Esophagus squamous epithelium (tissue), 5 donors: ENCODE measurements at regions of chr1 and their contacts with region 1.

Region 1: GRCh38 chr1:39098546-39099250 is 72.5 kb downstream of the NDUFS5 start:
- DNase-seq: no peak
- H3K4me3 ChIP-seq: no peak overlapping the region
- H3K27ac ChIP-seq: no peak overlapping the region
- H3K4me1 ChIP-seq: peaks cover 10 to 26% (median 11%) of the 10 kb centered on the region in 3 donors
- H3K27me3 ChIP-seq: no peaks in the 10 kb centered on the region
- CTCF ChIP-seq: peak; percentile 51 to 85 (median 66)
- POLR2A ChIP-seq: no peak

Region 2: DNA sequence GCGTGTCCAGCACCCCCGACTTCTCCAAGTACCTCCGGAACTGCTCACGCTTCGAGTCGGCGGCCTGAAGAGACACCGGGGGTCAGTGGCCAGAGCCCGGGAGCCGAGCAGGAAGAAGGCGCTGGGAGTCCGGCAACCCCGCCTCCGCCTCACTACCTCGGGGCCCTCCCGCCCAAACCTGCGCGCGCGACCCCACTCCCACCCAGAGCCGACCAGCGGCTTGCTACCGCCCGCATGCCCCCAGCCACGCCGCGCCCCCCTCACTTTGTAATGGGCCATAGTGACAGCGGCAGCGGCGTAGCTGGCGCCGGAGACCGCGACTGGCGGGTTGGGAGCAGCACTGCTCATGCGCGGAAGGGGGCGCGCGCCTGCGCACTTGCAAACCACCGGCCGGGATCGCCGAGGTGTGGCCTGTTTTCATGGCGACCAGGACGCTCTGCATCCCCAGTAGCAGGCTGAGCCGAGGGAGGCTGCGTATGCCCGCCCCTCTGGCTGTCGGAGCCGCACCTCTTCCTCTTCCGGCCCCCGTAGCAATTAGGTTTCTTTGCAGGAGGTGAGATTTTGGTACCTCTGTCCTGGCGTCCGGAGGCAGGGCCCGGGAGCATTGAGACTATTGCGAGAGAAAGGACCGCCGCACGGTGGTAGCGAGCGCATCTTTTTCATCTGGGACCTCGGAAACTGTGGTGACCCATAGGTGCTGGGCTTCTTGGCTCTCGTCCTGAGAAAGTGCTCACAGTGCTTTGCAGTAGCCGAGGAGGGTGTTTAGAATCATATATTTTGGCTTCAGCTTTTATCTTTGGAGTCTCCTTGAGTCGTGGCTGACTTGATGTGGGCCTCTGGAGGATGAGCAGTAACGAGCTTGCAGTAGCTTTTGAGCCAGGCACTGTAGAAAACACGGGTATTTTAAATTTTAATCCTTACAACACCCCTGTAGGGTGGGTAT is 225.4 kb before region 1 on chr1 and contains the start of gene MYCBP:
- intact Hi-C with region 1: loop called (anchors 10 kb)
- DNase-seq: peak; percentile 82
- H3K4me3 ChIP-seq: peak within 1 kb of the TSS; percentile 94 to 95 (median 94)
- H3K27ac ChIP-seq: peak within 1 kb of the TSS; percentile 71 to 87 (median 80)
- H3K4me1 ChIP-seq: peaks cover 9 to 27% (median 11%) of the 10 kb centered on the region in 3 donors
- H3K27me3 ChIP-seq: no peaks in the 10 kb centered on the region
- CTCF ChIP-seq: peak in 5 of 6 experiments; percentile 12 to 48 (median 27)
- POLR2A ChIP-seq: peak in 1 of 4 donors; percentile 69
- total RNA-seq, gene MYCBP: 22.7 to 42.0 (median 26.0) TPM

Region 3: GRCh38 chr1:39145331-39145965 is 46.8 kb after region 1 on chr1:
- intact Hi-C with region 1: no loop called
- DNase-seq: no peak
- H3K4me3 ChIP-seq: no peak overlapping the region
- H3K27ac ChIP-seq: no peak overlapping the region
- H3K4me1 ChIP-seq: peaks cover 4 to 49% (median 27%) of the 10 kb centered on the region in 3 donors
- H3K27me3 ChIP-seq: no peaks in the 10 kb centered on the region
- CTCF ChIP-seq: no peak
- POLR2A ChIP-seq: no peak

Region 4: DNA sequence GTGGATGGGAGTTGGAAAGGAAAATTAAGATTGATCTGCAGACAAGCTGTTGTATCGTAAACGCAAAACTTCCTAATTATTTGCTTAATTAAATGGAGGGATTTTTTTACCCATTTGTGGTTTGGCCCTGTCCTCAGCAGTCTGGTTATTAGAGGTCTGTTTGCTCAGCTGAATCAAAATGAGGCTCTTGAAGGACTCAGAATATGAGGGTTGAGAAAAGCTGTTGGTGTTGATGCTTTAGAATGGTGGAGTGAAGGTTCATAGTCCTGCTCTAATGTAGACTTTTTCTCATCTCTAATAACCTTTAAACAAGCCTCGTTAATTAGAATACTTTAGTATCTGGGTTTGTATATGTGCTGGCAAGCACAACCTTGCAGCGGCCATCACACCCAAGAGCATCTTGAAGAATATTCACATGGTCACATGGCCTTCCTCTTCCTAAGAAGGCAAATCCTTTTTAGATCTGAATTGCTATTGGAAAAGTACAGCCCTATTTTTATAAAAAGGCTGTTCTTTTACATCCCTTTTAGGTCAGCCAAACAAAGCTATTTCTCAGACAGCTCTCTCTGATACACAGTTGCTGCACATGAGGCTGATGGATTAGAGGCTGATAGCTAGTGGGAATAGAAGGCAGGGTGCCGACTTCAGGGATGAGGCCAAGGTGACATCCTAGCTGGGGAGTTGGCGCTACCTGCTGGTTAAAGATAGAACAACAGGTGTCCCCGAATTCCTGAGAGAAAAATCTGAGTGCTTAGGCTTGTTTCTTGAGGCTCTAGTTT is 159.6 kb after region 1 on chr1:
- intact Hi-C with region 1: loop called (anchors 5 kb)
- DNase-seq: no peak
- H3K4me3 ChIP-seq: no peak overlapping the region
- H3K27ac ChIP-seq: peak overlapping the region in 3 of 4 donors; percentile 25 to 56 (median 51)
- H3K4me1 ChIP-seq: peaks cover 0 to 17% (median 0%) of the 10 kb centered on the region in 3 donors
- H3K27me3 ChIP-seq: no peaks in the 10 kb centered on the region
- CTCF ChIP-seq: peak; percentile 75 to 93 (median 91)
- POLR2A ChIP-seq: no peak